HCT116 (cell line): ENCODE measurements at regions of chr5 and their contacts with region 1.

Region 1: GRCh38 chr5:174581479-174581878 is 142.9 kb upstream of the MSX2 start:
- DNase-seq: no peak
- ATAC-seq: peak; percentile 83
- H3K4me3 ChIP-seq: no peak overlapping the region
- H3K27ac ChIP-seq: no peak overlapping the region
- H3K4me1 ChIP-seq: peaks cover 4 to 39% of the 10 kb centered on the region in 2 experiments; a peak in 3 of 4 replicates
- H3K27me3 ChIP-seq: no peaks in the 10 kb centered on the region
- CTCF ChIP-seq: peak; percentile 79 to 82 (median 79)
- POLR2A ChIP-seq: no peak
- RAD21 ChIP-seq: peak; percentile 76

Region 2: DNA sequence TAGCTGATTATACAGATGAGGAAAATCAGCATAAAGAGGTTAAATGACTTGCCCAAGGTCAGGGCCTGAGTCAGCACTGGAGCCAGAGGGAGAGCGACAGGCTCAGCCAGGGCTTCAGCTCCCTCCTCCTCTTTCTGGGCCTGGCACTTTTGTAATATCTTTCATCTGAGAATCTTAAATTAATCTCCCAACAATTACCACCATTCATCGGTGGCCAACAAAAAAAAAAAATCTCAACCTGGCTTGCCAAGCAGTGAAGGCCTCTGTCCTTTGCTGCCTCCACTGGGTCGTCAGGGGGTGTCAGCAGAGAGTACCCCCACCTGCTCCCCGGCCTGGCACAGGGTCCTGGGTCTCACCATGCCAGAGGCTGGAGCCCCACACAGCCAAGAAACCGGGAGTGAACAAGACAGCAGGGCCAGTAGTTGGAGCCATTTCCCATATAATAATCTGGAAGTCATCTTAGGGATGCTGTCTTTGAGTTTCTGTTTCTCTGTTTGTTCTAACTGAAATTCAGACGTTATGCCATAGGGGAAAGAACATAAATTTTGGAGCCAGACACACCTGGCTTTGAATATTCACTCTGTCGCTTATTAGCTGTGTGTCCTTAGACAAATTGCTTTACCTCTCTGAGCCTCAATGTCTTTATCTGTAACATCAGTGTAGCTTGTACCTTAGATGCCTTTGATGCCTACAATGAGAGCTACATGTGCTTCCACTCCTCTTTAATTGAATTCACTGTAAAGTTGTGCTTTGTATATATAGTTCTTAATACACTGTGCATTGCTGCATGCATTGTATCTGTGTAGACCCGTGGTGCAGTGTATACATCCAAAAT is 157.0 kb before region 1 on chr5:
- CTCF ChIA-PET with region 1: interaction called, 3 read pairs
- POLR2A ChIA-PET with region 1: no interaction called
- RAD21 ChIA-PET with region 1: no interaction called
- intact Hi-C with region 1: loop called (anchors 5 kb)
- DNase-seq: no peak
- ATAC-seq: no peak
- H3K4me3 ChIP-seq: no peak overlapping the region
- H3K27ac ChIP-seq: no peak overlapping the region
- H3K4me1 ChIP-seq: peaks cover 9 to 12% of the 10 kb centered on the region in 2 experiments
- H3K27me3 ChIP-seq: no peaks in the 10 kb centered on the region; the same call in 1 of the 2 replicates
- CTCF ChIP-seq: peak; percentile 5 to 38 (median 12); a peak in 3 of 6 replicates
- POLR2A ChIP-seq: no peak
- RAD21 ChIP-seq: peak; percentile 48

Region 3: DNA sequence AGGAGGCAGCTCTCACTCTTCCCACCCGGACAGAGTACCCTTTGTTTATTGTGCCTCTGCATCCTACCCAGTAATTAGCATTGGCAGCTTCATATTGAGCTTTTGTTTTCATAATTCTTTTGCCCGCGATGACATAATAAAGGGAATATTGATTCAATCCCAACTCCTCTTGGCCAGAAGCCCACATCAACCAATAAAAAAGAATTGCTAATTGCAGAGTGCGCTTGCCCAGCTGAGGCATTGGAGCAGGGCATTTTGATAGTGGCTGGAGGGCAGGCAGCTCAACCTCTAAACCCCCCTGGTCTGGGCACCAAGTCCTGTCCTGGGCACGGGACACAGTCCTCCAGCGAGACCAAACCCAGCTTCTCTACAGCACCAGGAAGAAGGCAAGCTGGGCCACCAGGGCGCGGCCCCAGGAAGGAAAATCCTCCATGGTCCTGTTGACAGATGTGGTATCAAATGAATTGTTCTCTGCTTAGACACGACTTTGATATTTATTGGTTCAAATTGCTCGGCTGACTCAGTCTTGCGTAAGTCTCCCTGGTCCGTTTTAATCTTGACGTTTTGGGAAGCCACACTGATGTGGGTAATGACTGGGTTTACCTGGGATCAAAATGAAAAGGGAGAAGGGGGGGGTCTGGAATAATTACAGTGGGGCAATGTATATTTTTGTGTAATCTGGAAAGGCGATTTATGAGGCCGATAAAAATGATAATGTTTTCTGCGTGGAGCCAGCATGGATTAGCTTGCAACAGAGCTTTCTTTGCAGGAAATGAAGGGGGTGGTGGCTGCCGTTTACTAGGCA is 77.8 kb before region 1 on chr5:
- CTCF ChIA-PET with region 1: interaction called, 3 read pairs
- POLR2A ChIA-PET with region 1: interaction called, 3 read pairs
- RAD21 ChIA-PET with region 1: no interaction called
- intact Hi-C with region 1: loop called (anchors 2 kb)
- DNase-seq: peak; percentile 91
- ATAC-seq: peak; percentile 87
- H3K4me3 ChIP-seq: peak overlapping the region; percentile 18 to 43
- H3K27ac ChIP-seq: peak overlapping the region; percentile 64
- H3K4me1 ChIP-seq: peaks cover 49 to 53% of the 10 kb centered on the region in 2 experiments
- H3K27me3 ChIP-seq: peaks cover 28% of the 10 kb centered on the region; the same call in 1 of the 2 replicates
- CTCF ChIP-seq: no peak
- POLR2A ChIP-seq: no peak
- RAD21 ChIP-seq: no peak

Region 4: GRCh38 chr5:174724491-174725260 is 143.2 kb after region 1 on chr5 and contains the start of gene MSX2:
- CTCF ChIA-PET with region 1: interaction called, 3 read pairs
- POLR2A ChIA-PET with region 1: no interaction called
- RAD21 ChIA-PET with region 1: no interaction called
- intact Hi-C with region 1: loop called (anchors 1 kb)
- DNase-seq: peak; percentile 80
- ATAC-seq: peak; percentile 92
- H3K4me3 ChIP-seq: peak within 1 kb of the TSS; percentile 77 to 83
- H3K27ac ChIP-seq: peak within 1 kb of the TSS; percentile 75
- H3K4me1 ChIP-seq: peaks cover 7 to 35% of the 10 kb centered on the region in 2 experiments; a peak in 3 of 4 replicates
- H3K27me3 ChIP-seq: peaks cover 19% of the 10 kb centered on the region; the same call in 1 of the 2 replicates
- CTCF ChIP-seq: no peak
- POLR2A ChIP-seq: no peak
- RAD21 ChIP-seq: no peak
- total RNA-seq, gene MSX2: 11.3 TPM

Region 5: GRCh38 chr5:174793684-174794328 is 212.3 kb after region 1 on chr5:
- CTCF ChIA-PET with region 1: no interaction called
- POLR2A ChIA-PET with region 1: no interaction called
- RAD21 ChIA-PET with region 1: no interaction called
- intact Hi-C with region 1: loop called (anchors 2 kb)
- DNase-seq: peak; percentile 29
- ATAC-seq: peak; percentile 96
- H3K4me3 ChIP-seq: no peak overlapping the region
- H3K27ac ChIP-seq: no peak overlapping the region
- H3K4me1 ChIP-seq: peaks cover 0 to 8% of the 10 kb centered on the region in 2 experiments; a peak in 1 of 4 replicates
- H3K27me3 ChIP-seq: 0 out of 2 replicates have a peak, but pooled peaks cover 7% of the 10 kb centered on the region
- CTCF ChIP-seq: peak; percentile 85 to 94 (median 93)
- POLR2A ChIP-seq: no peak
- RAD21 ChIP-seq: peak; percentile 89